ENCODE measurements at regions of chrX and their contacts with region 1.

Region 1: DNA sequence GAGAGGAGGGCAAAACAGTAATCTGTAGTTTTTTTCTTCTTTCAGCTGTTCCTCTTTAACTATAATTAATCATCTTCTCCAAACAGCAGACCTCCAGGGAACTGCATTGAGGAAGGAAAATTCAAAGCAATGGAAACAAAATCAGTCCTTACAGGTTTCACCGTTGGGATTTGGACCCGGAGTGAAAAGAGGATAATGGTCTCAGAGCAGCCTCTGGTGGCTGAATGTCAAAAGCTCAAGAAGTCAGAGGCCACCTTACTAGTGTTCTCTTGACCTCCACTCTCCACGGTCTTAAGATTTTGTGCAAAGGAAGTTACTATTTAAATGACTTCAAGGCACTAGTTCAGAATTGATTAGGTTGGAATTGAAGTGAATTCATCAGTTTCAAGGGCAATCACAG is 16.0 kb upstream of the MID1 start:
- DNase-seq: peak; percentile 55
- H3K27ac ChIP-seq: no peak overlapping the region
- CTCF ChIP-seq: peak; percentile 63

Region 2: GRCh38 chrX:10189317-10190268 is 446.7 kb before region 1 on chrX:
- CTCF ChIA-PET with region 1: interaction called, 16 read pairs
- POLR2A ChIA-PET with region 1: no interaction called
- DNase-seq: peak; percentile 27
- H3K27ac ChIP-seq: no peak overlapping the region
- CTCF ChIP-seq: peak; percentile 38

Region 3: GRCh38 chrX:10755439-10756334 is 119.3 kb after region 1 on chrX:
- CTCF ChIA-PET with region 1: no interaction called
- POLR2A ChIA-PET with region 1: no interaction called
- DNase-seq: no peak
- H3K27ac ChIP-seq: no peak overlapping the region
- CTCF ChIP-seq: no peak

Region 4: GRCh38 chrX:10783451-10783995 is 147.2 kb after region 1 on chrX:
- CTCF ChIA-PET with region 1: interaction called, 10 read pairs
- POLR2A ChIA-PET with region 1: no interaction called
- DNase-seq: no peak
- H3K27ac ChIP-seq: no peak overlapping the region
- CTCF ChIP-seq: no peak